ENCODE measurements at regions of chr1 and their contacts with region 1.

Region 1: DNA sequence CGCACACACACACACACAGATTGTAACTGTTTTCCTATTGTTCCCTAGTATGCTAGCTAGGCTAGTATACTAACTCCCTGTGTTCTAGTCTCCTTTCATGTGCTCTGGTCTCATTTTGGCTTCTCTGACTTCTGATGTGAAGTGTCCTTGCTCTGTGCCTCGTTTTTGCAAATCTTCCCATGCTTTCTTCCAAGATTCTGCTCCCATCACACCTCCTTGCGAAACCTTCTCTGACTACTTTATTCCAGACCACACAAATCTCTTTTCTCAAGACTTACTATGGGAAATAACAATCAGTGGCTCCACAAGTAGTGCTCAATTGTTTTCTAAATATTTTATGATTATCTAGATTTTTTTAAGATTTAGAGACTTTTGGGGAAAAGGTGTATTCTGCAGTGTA is 10.3 kb downstream of the PRRX1 start:
- DNase-seq: no peak
- H3K4me3 ChIP-seq: no peak overlapping the region
- CTCF ChIP-seq: no peak

Region 2: GRCh38 chr1:170687621-170688020 is 13.4 kb after region 1 on chr1:
- CTCF ChIA-PET with region 1: interaction called, 20 read pairs
- POLR2A ChIA-PET with region 1: no interaction called
- DNase-seq: no peak
- H3K4me3 ChIP-seq: no peak overlapping the region
- CTCF ChIP-seq: no peak

Measured in AG04449 (cell line).